ENCODE measurements at regions of chr10 and their contacts with region 1.

Region 1: GRCh38 chr10:124719213-124719851 is 24.8 kb downstream of the FAM53B start:
- DNase-seq: no peak
- ATAC-seq: peak; percentile 43
- H3K4me3 Mint-ChIP-seq: peak overlapping the region; percentile 69
- H3K27ac Mint-ChIP-seq: peak overlapping the region; percentile 93
- H3K4me1 Mint-ChIP-seq: peaks cover 98% of the 10 kb centered on the region
- H3K27me3 Mint-ChIP-seq: no peaks in the 10 kb centered on the region
- CTCF ChIP-seq: no peak

Region 2: GRCh38 chr10:124461438-124462347 is 257.6 kb before region 1 on chr10 and contains the start of gene LHPP:
- CTCF ChIA-PET with region 1: no interaction called
- POLR2A ChIA-PET with region 1: no interaction called
- intact Hi-C with region 1: loop called (anchors 1 kb)
- DNase-seq: peak; percentile 91
- ATAC-seq: peak; percentile 92
- H3K4me3 Mint-ChIP-seq: peak within 1 kb of the TSS; percentile 92
- H3K27ac Mint-ChIP-seq: peak within 1 kb of the TSS; percentile 95
- H3K4me1 Mint-ChIP-seq: peaks cover 32% of the 10 kb centered on the region
- H3K27me3 Mint-ChIP-seq: peaks cover 4% of the 10 kb centered on the region
- CTCF ChIP-seq: no peak
- total RNA-seq, gene LHPP: 21.0 and 22.9 TPM in 2 replicates

Region 3: GRCh38 chr10:124545351-124546054 is 173.8 kb before region 1 on chr10:
- CTCF ChIA-PET with region 1: interaction called, 20 read pairs
- POLR2A ChIA-PET with region 1: interaction called, 25 read pairs
- intact Hi-C with region 1: loop called (anchors 1 kb)
- DNase-seq: no peak
- ATAC-seq: peak; percentile 7
- H3K4me3 Mint-ChIP-seq: peak overlapping the region; percentile 62
- H3K27ac Mint-ChIP-seq: peak overlapping the region; percentile 77
- H3K4me1 Mint-ChIP-seq: peaks cover 93% of the 10 kb centered on the region
- H3K27me3 Mint-ChIP-seq: no peaks in the 10 kb centered on the region
- CTCF ChIP-seq: no peak

Region 4: GRCh38 chr10:124619195-124619594 is 100.1 kb before region 1 on chr10:
- CTCF ChIA-PET with region 1: interaction called, 24 read pairs
- POLR2A ChIA-PET with region 1: interaction called, 33 read pairs
- intact Hi-C with region 1: loop called (anchors 1 kb)
- DNase-seq: no peak
- ATAC-seq: peak; percentile 72
- H3K4me3 Mint-ChIP-seq: peak overlapping the region; percentile 69
- H3K27ac Mint-ChIP-seq: peak overlapping the region; percentile 96
- H3K4me1 Mint-ChIP-seq: peaks cover 99% of the 10 kb centered on the region
- H3K27me3 Mint-ChIP-seq: no peaks in the 10 kb centered on the region
- CTCF ChIP-seq: no peak

Region 5: GRCh38 chr10:124641282-124642087 is 77.8 kb before region 1 on chr10:
- CTCF ChIA-PET with region 1: interaction called, 16 read pairs
- POLR2A ChIA-PET with region 1: interaction called, 18 read pairs
- intact Hi-C with region 1: loop called (anchors 1 kb)
- DNase-seq: no peak
- ATAC-seq: peak; percentile 81
- H3K4me3 Mint-ChIP-seq: peak overlapping the region; percentile 74
- H3K27ac Mint-ChIP-seq: peak overlapping the region; percentile 94
- H3K4me1 Mint-ChIP-seq: peaks cover 100% of the 10 kb centered on the region
- H3K27me3 Mint-ChIP-seq: no peaks in the 10 kb centered on the region
- CTCF ChIP-seq: no peak

Region 6: GRCh38 chr10:124697830-124698544 is 21.3 kb before region 1 on chr10:
- CTCF ChIA-PET with region 1: interaction called, 24 read pairs
- POLR2A ChIA-PET with region 1: interaction called, 133 read pairs
- intact Hi-C with region 1: loop called (anchors 1 kb)
- DNase-seq: peak; percentile 44
- ATAC-seq: peak; percentile 45
- H3K4me3 Mint-ChIP-seq: peak overlapping the region; percentile 69
- H3K27ac Mint-ChIP-seq: peak overlapping the region; percentile 96
- H3K4me1 Mint-ChIP-seq: peaks cover 100% of the 10 kb centered on the region
- H3K27me3 Mint-ChIP-seq: no peaks in the 10 kb centered on the region
- CTCF ChIP-seq: no peak

Region 7: DNA sequence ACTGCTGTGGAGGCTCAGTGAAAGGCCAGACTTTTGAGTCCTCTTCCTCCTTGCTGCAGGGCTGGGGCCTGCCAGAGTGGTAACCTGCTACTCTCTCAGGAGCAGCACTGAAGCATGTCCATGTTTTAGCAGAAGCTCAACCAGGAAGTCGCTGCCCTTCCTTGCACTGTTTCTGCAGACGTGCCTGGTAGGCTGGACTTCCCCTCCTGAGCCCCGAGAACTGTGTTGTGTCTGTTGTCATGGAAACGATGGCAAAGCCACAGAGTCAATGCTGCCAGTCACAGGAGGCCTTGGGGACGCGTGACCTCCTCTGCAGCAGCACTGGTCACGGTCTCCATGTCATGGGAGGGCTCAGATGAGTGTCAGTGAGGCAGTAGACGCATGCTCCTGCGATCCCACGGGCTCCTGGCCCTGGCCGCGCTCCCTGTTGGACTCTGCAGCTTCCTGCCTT is 1322.5 kb after region 1 on chr10:
- CTCF ChIA-PET with region 1: no interaction called
- POLR2A ChIA-PET with region 1: no interaction called
- intact Hi-C with region 1: loop called (anchors 10 kb)
- DNase-seq: peak; percentile 82
- ATAC-seq: peak; percentile 89
- H3K4me3 Mint-ChIP-seq: peak overlapping the region; percentile 78
- H3K27ac Mint-ChIP-seq: peak overlapping the region; percentile 100
- H3K4me1 Mint-ChIP-seq: peaks cover 69% of the 10 kb centered on the region
- H3K27me3 Mint-ChIP-seq: no peaks in the 10 kb centered on the region
- CTCF ChIP-seq: no peak